ENCODE measurements at regions of chr3 and their contacts with region 1.

Region 1: DNA sequence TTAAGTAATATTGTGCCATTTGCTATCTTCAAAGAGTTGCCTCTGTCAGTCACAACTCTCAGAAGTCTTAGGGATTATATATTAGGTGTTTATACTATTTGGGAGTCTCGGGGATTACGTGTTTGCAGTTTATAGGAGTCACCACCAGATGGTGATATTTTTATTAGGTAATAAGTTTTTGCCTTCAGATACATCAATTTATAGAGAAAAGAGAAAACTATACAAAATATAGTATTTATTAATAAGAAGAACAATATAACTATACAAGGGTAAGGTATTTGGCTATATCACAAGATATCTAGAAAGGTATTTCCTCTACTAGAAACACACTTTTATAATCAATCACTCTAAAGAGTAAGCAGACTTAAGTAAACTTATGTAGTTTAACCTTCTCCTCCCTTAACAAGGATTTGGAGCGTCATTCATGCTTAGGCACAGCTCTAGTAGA is 10.7 kb upstream of the DHX36 start:
- DNase-seq: no peak
- ATAC-seq: peak in 1 of 4 donors; percentile 68
- H3K4me3 ChIP-seq: no peak overlapping the region
- H3K27ac ChIP-seq: no peak overlapping the region
- H3K4me1 ChIP-seq: no peaks in the 10 kb centered on the region
- H3K27me3 ChIP-seq: peaks cover 0 to 4% (median 3%) of the 10 kb centered on the region in 3 donors
- CTCF ChIP-seq: peak; percentile 70

Region 2: GRCh38 chr3:154730186-154730585 is 395.2 kb after region 1 on chr3:
- intact Hi-C with region 1: loop called in 1 of 2 experiments (anchors 5 kb)
- DNase-seq: no peak
- ATAC-seq: no peak
- H3K4me3 ChIP-seq: no peak overlapping the region
- H3K27ac ChIP-seq: no peak overlapping the region
- H3K4me1 ChIP-seq: no peaks in the 10 kb centered on the region
- H3K27me3 ChIP-seq: peaks cover 0 to 3% (median 0%) of the 10 kb centered on the region in 3 donors
- CTCF ChIP-seq: peak; percentile 29

Region 3: GRCh38 chr3:154862265-154862664 is 527.3 kb after region 1 on chr3:
- intact Hi-C with region 1: no loop called
- DNase-seq: no peak
- ATAC-seq: peak in 2 of 4 donors; percentile 19 to 64
- H3K4me3 ChIP-seq: no peak overlapping the region
- H3K27ac ChIP-seq: no peak overlapping the region
- H3K4me1 ChIP-seq: no peaks in the 10 kb centered on the region
- H3K27me3 ChIP-seq: no peaks in the 10 kb centered on the region
- CTCF ChIP-seq: no peak

Measured in psoas muscle (tissue), 8 donors.